ENCODE measurements at regions of chr2 and their contacts with region 1.

Region 1: DNA sequence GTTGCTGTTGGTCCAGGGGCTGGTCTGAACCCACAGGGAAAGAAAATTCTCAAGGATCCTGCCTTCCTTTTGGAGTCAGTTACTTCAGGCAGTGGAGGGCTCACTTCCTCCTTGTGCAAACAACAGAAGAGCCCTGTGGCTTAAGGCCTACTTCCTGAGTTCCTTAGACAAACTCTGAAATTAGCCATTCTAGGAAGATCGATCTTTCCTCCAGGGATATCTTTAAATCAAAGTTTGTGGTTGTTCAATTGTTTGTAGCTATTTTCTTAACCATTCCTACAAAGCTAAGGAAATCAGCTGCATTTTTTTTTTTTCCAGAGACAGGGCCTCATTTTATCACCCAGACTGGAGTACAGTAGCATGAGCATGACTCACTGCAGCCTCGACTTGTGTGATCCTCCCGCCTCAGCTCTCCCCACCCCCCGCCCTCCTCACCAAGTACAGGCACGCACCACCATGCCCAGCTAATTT is 156.0 kb downstream of the TANC1 start:
- DNase-seq: no peak

Region 2: DNA sequence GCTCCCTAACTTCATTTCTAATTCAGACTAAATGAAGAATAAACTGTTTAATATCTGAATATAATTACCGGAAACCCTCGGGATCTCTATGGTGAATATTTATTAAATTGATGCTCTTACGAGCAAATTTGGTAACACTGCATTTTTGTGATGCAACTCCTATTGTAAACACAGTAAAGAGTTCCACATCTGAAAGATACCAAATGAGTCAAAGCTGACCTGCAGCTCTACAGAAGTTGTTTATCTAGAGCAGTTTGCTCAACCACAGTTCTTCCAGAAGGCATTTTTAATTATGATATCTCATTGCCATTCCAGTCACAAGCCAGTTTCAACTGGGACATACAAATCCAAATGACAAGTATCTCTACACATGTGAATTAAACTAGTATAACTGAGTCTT is 538.0 kb before region 1 on chr2:
- intact Hi-C with region 1: no loop called
- DNase-seq: no peak

Region 3: GRCh38 chr2:158903711-158904443 is 220.6 kb before region 1 on chr2:
- intact Hi-C with region 1: loop called (anchors 5 to 10 kb)
- DNase-seq: no peak